ENCODE measurements at regions of chr16 and their contacts with region 1.

Region 1: DNA sequence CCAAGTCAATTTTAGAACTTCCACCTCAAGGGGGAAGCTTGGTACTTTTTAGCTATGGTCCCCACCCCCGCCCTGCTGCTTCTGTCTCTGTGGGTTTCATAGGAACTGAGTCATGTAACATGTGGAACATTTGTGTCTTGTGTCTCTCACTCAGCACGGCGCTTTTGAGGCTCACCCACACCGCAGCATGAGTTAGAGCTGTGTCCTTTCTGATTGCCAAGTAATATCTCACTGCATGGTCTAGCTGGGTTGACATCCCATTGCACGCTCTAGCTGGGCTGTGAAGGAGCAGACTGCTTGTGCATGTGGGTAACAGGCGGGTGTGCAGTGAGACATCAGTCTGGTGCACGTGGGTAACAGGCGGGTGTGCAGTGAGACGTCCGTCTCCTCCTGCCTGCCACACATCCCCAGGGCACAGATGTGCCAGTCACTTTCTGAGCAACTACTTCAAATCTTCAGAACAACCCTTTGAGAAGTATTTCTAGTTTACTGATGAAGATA is 26.4 kb upstream of the SLC7A5 start:
- DNase-seq: no peak
- ATAC-seq: no peak
- H3K4me3 ChIP-seq: no peak overlapping the region
- H3K27ac ChIP-seq: no peak overlapping the region
- H3K4me1 ChIP-seq: peaks cover 7% of the 10 kb centered on the region
- H3K27me3 ChIP-seq: no peaks in the 10 kb centered on the region
- CTCF ChIP-seq: no peak

Region 2: GRCh38 chr16:87778830-87779579 is 116.7 kb before region 1 on chr16:
- intact Hi-C with region 1: loop called (anchors 10 kb)
- DNase-seq: peak; percentile 91 to 95
- ATAC-seq: peak; percentile 91 to 93 (median 92)
- H3K4me3 ChIP-seq: no peak overlapping the region
- H3K27ac ChIP-seq: no peak overlapping the region
- H3K4me1 ChIP-seq: peaks cover 15% of the 10 kb centered on the region
- H3K27me3 ChIP-seq: no peaks in the 10 kb centered on the region
- CTCF ChIP-seq: peak; percentile 100

Region 3: DNA sequence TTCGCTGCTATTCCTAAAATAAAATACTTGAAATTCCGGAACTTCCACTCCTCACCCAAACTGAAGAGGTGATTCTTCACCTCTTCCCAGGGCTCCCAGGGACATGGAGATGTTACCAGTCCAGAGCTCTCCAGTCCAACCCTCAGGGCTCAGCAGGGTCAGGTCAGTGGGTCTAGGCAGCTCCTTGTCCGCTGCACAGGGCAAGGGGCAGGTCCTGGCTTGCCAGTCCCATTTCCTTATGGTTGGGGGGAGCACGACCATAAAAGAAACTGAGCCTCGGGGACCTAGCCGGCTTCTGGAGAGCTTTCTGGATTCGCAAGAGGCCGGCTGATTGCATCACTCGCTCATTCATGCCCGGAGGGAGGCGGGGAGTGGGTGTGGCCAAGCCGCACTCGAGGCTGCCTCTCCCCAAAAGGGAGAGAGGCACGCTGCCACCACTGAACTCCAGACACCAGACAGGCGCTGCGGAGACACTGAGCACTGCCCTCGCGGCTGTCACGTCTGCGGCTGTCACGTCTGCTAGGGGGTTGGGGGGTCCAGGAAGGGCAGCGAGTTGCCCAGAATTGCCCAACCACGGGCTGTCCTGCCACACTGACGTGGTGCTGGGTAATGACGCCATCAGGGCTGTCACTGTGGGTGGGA is 42.2 kb before region 1 on chr16:
- intact Hi-C with region 1: loop called in 1 of 2 experiments (anchors 10 kb)
- DNase-seq: peak; percentile 95 to 97
- ATAC-seq: peak; percentile 65 to 77 (median 68)
- H3K4me3 ChIP-seq: peak overlapping the region; percentile 69
- H3K27ac ChIP-seq: peak overlapping the region; percentile 96
- H3K4me1 ChIP-seq: peaks cover 78% of the 10 kb centered on the region
- H3K27me3 ChIP-seq: no peaks in the 10 kb centered on the region
- CTCF ChIP-seq: no peak

Measured in psoas muscle (tissue), 8 donors.